A549 (cell line): ENCODE measurements at regions of chr17 and their contacts with region 1.

Region 1: GRCh38 chr17:32659419-32659842 is 172.6 kb downstream of the CDK5R1 start:
- DNase-seq: peak; percentile 78 to 84
- ATAC-seq: peak; percentile 78 to 95
- H3K4me3 ChIP-seq: no peak overlapping the region
- H3K27ac ChIP-seq: no peak overlapping the region
- H3K4me1 ChIP-seq: no peaks in the 10 kb centered on the region
- CTCF ChIP-seq: peak; percentile 73
- EP300 ChIP-seq: no peak
- POLR2A ChIP-seq: no peak
- RAD21 ChIP-seq: peak; percentile 55 to 65; a peak in 4 of 5 replicates

Region 2: DNA sequence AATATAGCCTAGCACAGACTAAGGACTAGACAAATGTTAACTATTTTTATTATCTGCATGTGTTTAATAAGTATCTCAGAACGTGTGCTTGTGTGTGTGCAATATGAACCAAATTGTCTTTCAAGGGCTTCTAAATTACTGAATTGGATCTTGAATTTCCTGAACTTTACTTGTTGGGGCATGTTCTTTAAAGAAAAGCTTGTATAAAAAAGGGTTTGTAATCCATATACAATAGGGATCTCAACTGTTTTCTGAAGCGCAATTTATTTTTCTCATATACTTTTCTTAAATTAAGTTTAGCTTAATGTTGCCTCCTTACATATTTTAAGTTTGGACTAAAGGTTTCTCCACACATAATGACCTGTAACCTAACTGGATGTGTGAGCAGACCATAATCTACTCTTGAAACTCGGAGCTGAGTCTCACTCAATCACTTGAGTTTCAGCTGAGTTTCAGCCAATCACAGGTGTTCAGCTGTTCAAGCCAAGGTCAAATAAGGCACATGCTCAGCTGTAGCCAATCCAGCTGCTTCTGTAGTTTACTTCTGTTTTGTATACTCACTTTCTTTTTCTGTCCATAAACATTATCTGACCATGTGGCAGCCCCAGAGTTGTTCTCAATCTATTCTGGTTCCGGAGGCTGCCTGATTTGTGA is 100.3 kb before region 1 on chr17:
- CTCF ChIA-PET with region 1: no interaction called
- POLR2A ChIA-PET with region 1: no interaction called
- DNase-seq: peak in 1 of 2 experiments; percentile 10
- ATAC-seq: peak in 1 of 2 experiments; percentile 30; a peak in 1 of 6 replicates
- H3K4me3 ChIP-seq: no peak overlapping the region
- H3K27ac ChIP-seq: no peak overlapping the region
- H3K4me1 ChIP-seq: no peaks in the 10 kb centered on the region
- CTCF ChIP-seq: no peak
- EP300 ChIP-seq: no peak
- POLR2A ChIP-seq: no peak
- RAD21 ChIP-seq: no peak

Region 3: DNA sequence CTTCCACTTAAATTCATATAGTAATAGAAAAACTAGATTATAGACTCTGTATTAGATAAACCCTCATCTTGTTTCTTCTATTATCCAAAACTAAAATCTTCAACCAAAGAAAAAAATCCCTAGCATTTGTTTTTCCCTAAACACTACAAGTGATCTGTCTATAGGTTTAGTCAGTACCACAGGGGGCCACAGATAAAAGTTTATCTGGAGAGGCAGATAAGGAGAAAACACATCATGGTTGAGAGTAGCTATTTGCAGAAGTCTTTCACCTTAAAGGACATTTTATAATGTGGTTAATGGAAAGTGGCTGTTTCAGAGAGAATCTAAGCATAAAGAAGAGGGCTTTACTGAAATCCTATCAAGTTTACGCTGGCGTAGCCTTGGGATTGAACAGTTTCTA is 12.5 kb before region 1 on chr17:
- CTCF ChIA-PET with region 1: interaction called, 17 read pairs
- POLR2A ChIA-PET with region 1: no interaction called
- DNase-seq: no peak
- ATAC-seq: no peak
- H3K4me3 ChIP-seq: no peak overlapping the region
- H3K27ac ChIP-seq: no peak overlapping the region
- H3K4me1 ChIP-seq: no peaks in the 10 kb centered on the region
- CTCF ChIP-seq: no peak
- EP300 ChIP-seq: no peak
- POLR2A ChIP-seq: no peak
- RAD21 ChIP-seq: no peak

Region 4: GRCh38 chr17:32696426-32696825 is 37.0 kb after region 1 on chr17:
- CTCF ChIA-PET with region 1: interaction called, 11 read pairs
- POLR2A ChIA-PET with region 1: no interaction called
- DNase-seq: no peak
- ATAC-seq: no peak
- H3K4me3 ChIP-seq: no peak overlapping the region
- H3K27ac ChIP-seq: no peak overlapping the region
- H3K4me1 ChIP-seq: no peaks in the 10 kb centered on the region
- CTCF ChIP-seq: no peak
- EP300 ChIP-seq: no peak
- POLR2A ChIP-seq: no peak
- RAD21 ChIP-seq: no peak

Region 5: GRCh38 chr17:32746698-32747097 is 87.3 kb after region 1 on chr17:
- CTCF ChIA-PET with region 1: interaction called, 12 read pairs
- POLR2A ChIA-PET with region 1: no interaction called
- DNase-seq: no peak
- ATAC-seq: no peak
- H3K4me3 ChIP-seq: no peak overlapping the region
- H3K27ac ChIP-seq: no peak overlapping the region
- H3K4me1 ChIP-seq: peaks cover 13% of the 10 kb centered on the region; the same call in 1 of the 3 replicates
- CTCF ChIP-seq: no peak
- EP300 ChIP-seq: no peak
- POLR2A ChIP-seq: no peak
- RAD21 ChIP-seq: no peak

Region 6: GRCh38 chr17:32755045-32755805 is 95.8 kb after region 1 on chr17:
- CTCF ChIA-PET with region 1: interaction called, 13 read pairs
- POLR2A ChIA-PET with region 1: no interaction called
- DNase-seq: peak; percentile 55 to 78
- ATAC-seq: peak; percentile 91 to 95
- H3K4me3 ChIP-seq: no peak overlapping the region
- H3K27ac ChIP-seq: no peak overlapping the region
- H3K4me1 ChIP-seq: no peaks in the 10 kb centered on the region
- CTCF ChIP-seq: peak; percentile 86
- EP300 ChIP-seq: no peak
- POLR2A ChIP-seq: no peak
- RAD21 ChIP-seq: peak; percentile 89 to 91